ENCODE measurements at regions of chr2 and their contacts with region 1.

Region 1: DNA sequence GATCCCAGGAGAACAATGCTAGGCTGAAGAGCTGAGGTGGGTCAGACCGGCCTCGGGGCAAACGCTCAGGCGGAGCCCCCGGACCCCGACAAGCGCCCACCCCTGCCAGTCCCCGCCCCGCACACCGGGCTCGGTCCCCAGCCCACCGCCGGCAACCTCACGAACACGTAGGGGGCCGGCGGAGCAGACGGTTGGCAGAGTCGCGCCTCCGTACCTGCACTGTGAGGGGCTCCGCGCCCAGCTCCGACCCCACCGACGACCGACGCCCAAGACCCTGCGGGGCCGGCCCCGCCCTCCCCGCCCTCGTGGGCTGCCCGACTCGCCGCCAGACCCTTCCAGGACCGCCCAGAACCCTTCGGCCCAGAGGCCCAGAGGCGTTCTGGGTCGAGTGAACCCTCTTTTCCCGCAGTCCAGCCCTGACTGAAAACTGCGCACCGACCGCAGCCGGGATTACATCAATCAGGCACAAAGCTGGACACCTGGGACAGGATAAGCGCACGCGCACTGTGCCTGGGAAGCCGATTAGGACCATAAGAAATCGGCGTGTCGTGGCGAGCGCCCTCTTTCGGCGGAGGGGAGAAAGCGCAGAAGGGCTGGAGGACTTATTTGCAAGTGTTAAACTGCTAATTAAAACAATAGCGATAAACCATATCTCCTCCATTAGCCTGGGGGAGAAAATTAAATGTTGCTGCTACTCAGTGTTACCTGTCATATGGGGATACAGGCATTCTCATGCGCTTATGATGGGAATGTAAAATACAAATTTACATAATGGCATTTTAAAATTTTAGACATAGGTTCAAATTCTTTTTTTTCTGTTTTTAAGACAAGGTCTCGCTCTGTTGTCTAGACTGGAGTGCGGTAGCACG is 11.7 kb upstream of the DCTN1 start:
- DNase-seq: peak; percentile 93
- H3K4me3 Mint-ChIP-seq: peak overlapping the region; percentile 74
- H3K27ac Mint-ChIP-seq: peak overlapping the region; percentile 86
- H3K4me1 Mint-ChIP-seq: peaks cover 8% of the 10 kb centered on the region
- H3K27me3 Mint-ChIP-seq: no peaks in the 10 kb centered on the region
- CTCF ChIP-seq: peak; percentile 83

Region 2: DNA sequence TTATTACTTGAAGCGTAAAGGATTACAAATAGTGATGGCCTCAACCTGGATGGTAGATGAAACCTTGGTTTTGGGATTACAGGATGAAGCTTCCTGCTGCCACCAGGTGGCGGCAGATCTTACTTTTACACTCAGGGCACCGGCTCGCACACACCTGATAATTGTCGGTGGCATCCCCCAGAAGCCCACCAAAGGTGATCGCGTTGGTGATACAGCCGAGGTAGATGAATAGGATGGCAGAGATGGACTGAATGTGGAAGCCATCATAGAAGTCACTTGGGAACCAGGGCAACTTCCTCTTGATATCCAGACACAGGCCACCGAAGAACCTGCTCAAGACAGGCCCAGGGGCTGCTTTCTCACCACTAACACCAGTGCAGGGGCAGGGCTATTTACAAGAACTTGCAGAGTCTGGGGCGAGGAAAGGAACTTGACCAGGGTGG is 141.6 kb before region 1 on chr2:
- CTCF ChIA-PET with region 1: no interaction called
- intact Hi-C with region 1: loop called (anchors 5 kb)
- DNase-seq: peak; percentile 54
- H3K4me3 Mint-ChIP-seq: no peak overlapping the region
- H3K27ac Mint-ChIP-seq: no peak overlapping the region
- H3K4me1 Mint-ChIP-seq: no peaks in the 10 kb centered on the region
- H3K27me3 Mint-ChIP-seq: no peaks in the 10 kb centered on the region
- CTCF ChIP-seq: peak; percentile 87

Region 3: GRCh38 chr2:74286725-74287124 is 105.1 kb before region 1 on chr2:
- CTCF ChIA-PET with region 1: no interaction called
- intact Hi-C with region 1: no loop called
- DNase-seq: no peak
- H3K4me3 Mint-ChIP-seq: no peak overlapping the region
- H3K27ac Mint-ChIP-seq: no peak overlapping the region
- H3K4me1 Mint-ChIP-seq: no peaks in the 10 kb centered on the region
- H3K27me3 Mint-ChIP-seq: no peaks in the 10 kb centered on the region
- CTCF ChIP-seq: no peak

Region 4: GRCh38 chr2:74401891-74402290 is 10.1 kb after region 1 on chr2:
- CTCF ChIA-PET with region 1: interaction called, 13 read pairs
- intact Hi-C with region 1: no loop called
- DNase-seq: no peak
- H3K4me3 Mint-ChIP-seq: no peak overlapping the region
- H3K27ac Mint-ChIP-seq: no peak overlapping the region
- H3K4me1 Mint-ChIP-seq: peaks cover 10% of the 10 kb centered on the region
- H3K27me3 Mint-ChIP-seq: no peaks in the 10 kb centered on the region
- CTCF ChIP-seq: no peak

Region 5: DNA sequence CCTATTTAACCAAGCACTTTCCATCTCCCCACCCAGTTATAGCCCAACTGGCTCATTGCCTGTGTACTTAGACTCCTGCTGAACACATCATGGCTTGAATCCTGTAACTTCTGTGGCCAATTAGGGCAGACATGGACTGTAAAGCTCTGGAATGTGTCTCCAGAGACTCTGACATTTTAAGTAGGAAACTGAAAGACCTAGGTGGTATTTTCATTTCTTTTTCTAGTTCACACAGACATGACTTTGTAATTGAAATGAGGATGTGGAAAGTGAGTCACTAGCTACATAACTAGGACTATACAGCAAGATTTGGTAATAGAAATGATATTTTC is 174.9 kb after region 1 on chr2:
- CTCF ChIA-PET with region 1: no interaction called
- intact Hi-C with region 1: no loop called
- DNase-seq: no peak
- H3K4me3 Mint-ChIP-seq: no peak overlapping the region
- H3K27ac Mint-ChIP-seq: no peak overlapping the region
- H3K4me1 Mint-ChIP-seq: no peaks in the 10 kb centered on the region
- H3K27me3 Mint-ChIP-seq: peaks cover 52% of the 10 kb centered on the region
- CTCF ChIP-seq: no peak

Region 6: GRCh38 chr2:75602724-75603342 is 1211.0 kb after region 1 on chr2:
- CTCF ChIA-PET with region 1: no interaction called
- intact Hi-C with region 1: no loop called
- DNase-seq: no peak
- H3K4me3 Mint-ChIP-seq: no peak overlapping the region
- H3K27ac Mint-ChIP-seq: no peak overlapping the region
- H3K4me1 Mint-ChIP-seq: no peaks in the 10 kb centered on the region
- H3K27me3 Mint-ChIP-seq: peaks cover 48% of the 10 kb centered on the region
- CTCF ChIP-seq: no peak

Measured in Calu3 (cell line).